Naive thymus-derived CD4-positive, alpha-beta T cell (primary cell): ENCODE measurements at regions of chr3 and their contacts with region 1.

Region 1: GRCh38 chr3:16264708-16265454 is at the starts of genes DPH3 and OXNAD1:
- DNase-seq: peak; percentile 97 to 99 (median 98)
- ATAC-seq: peak; percentile 96
- H3K4me3 ChIP-seq: peak within 1 kb of the TSS; percentile 85
- H3K4me3 Mint-ChIP-seq: peak within 1 kb of the TSS; percentile 85 to 100 (median 98)
- H3K27ac ChIP-seq: peak within 1 kb of the TSS; percentile 88
- H3K27ac Mint-ChIP-seq: peak within 1 kb of the TSS; percentile 96 to 100 (median 98)
- H3K4me1 ChIP-seq: peaks cover 13 to 28% of the 10 kb centered on the region in 2 donors
- H3K4me1 Mint-ChIP-seq: peaks cover 13 to 50% (median 43%) of the 10 kb centered on the region in 7 donors
- H3K27me3 ChIP-seq: no peaks in the 10 kb centered on the region
- H3K27me3 Mint-ChIP-seq: peaks cover 0 to 2% (median 0%) of the 10 kb centered on the region in 5 donors
- total RNA-seq, gene DPH3: 12.4 to 23.6 (median 15.7) TPM
- total RNA-seq, gene OXNAD1: 80.3 to 171 (median 152) TPM

Region 2: GRCh38 chr3:14548321-14548729 is 1716.6 kb before region 1 on chr3:
- CTCF ChIA-PET with region 1: no interaction called
- POLR2A ChIA-PET with region 1: no interaction called
- intact Hi-C with region 1: no loop called
- DNase-seq: peak in 5 of 9 donors; percentile 21 to 33 (median 22)
- ATAC-seq: peak; percentile 47
- H3K4me3 ChIP-seq: no peak overlapping the region
- H3K4me3 Mint-ChIP-seq: no peak overlapping the region
- H3K27ac ChIP-seq: no peak overlapping the region
- H3K27ac Mint-ChIP-seq: no peak overlapping the region
- H3K4me1 ChIP-seq: no peaks in the 10 kb centered on the region
- H3K4me1 Mint-ChIP-seq: peaks cover 0 to 8% (median 0%) of the 10 kb centered on the region in 7 donors
- H3K27me3 ChIP-seq: no peaks in the 10 kb centered on the region
- H3K27me3 Mint-ChIP-seq: peaks cover 18 to 57% (median 41%) of the 10 kb centered on the region in 5 donors

Region 3: GRCh38 chr3:15205934-15206661 is 1058.8 kb before region 1 on chr3 and contains the start of gene CAPN7:
- CTCF ChIA-PET with region 1: no interaction called
- POLR2A ChIA-PET with region 1: interaction called, 4 read pairs
- intact Hi-C with region 1: loop called (anchors 1 kb)
- DNase-seq: peak; percentile 90 to 98 (median 92)
- ATAC-seq: peak; percentile 96
- H3K4me3 ChIP-seq: peak within 1 kb of the TSS; percentile 91
- H3K4me3 Mint-ChIP-seq: peak within 1 kb of the TSS; percentile 85 to 96 (median 94)
- H3K27ac ChIP-seq: peak within 1 kb of the TSS; percentile 94
- H3K27ac Mint-ChIP-seq: peak within 1 kb of the TSS; percentile 87 to 96 (median 93)
- H3K4me1 ChIP-seq: peaks cover 11 to 15% of the 10 kb centered on the region in 2 donors
- H3K4me1 Mint-ChIP-seq: peaks cover 19 to 52% (median 36%) of the 10 kb centered on the region in 7 donors
- H3K27me3 ChIP-seq: no peaks in the 10 kb centered on the region
- H3K27me3 Mint-ChIP-seq: no peaks in the 10 kb centered on the region
- total RNA-seq, gene CAPN7: 34.4 to 104 (median 70.4) TPM

Region 4: GRCh38 chr3:16290007-16290826 is 25.3 kb after region 1 on chr3:
- CTCF ChIA-PET with region 1: interaction called, 92 read pairs
- POLR2A ChIA-PET with region 1: interaction called, 36 read pairs
- intact Hi-C with region 1: loop called (anchors 1 kb)
- DNase-seq: peak in 6 of 9 donors; percentile 44 to 67 (median 62)
- ATAC-seq: peak; percentile 58
- H3K4me3 ChIP-seq: peak overlapping the region; percentile 67
- H3K4me3 Mint-ChIP-seq: peak overlapping the region; percentile 87 to 99 (median 96)
- H3K27ac ChIP-seq: peak overlapping the region; percentile 90
- H3K27ac Mint-ChIP-seq: peak overlapping the region; percentile 86 to 99 (median 97)
- H3K4me1 ChIP-seq: peaks cover 32 to 65% of the 10 kb centered on the region in 2 donors
- H3K4me1 Mint-ChIP-seq: peaks cover 38 to 77% (median 53%) of the 10 kb centered on the region in 7 donors
- H3K27me3 ChIP-seq: no peaks in the 10 kb centered on the region
- H3K27me3 Mint-ChIP-seq: no peaks in the 10 kb centered on the region

Region 5: GRCh38 chr3:16378920-16379319 is 114.0 kb after region 1 on chr3:
- CTCF ChIA-PET with region 1: no interaction called
- POLR2A ChIA-PET with region 1: interaction called, 3 read pairs
- intact Hi-C with region 1: loop called in 1 of 2 experiments (anchors 2 kb)
- DNase-seq: no peak
- ATAC-seq: peak; percentile 19
- H3K4me3 ChIP-seq: no peak overlapping the region
- H3K4me3 Mint-ChIP-seq: peak overlapping the region in 8 of 10 donors; percentile 26 to 85 (median 42)
- H3K27ac ChIP-seq: no peak overlapping the region
- H3K27ac Mint-ChIP-seq: peak overlapping the region in 8 of 9 donors; percentile 54 to 94 (median 90)
- H3K4me1 ChIP-seq: peaks cover 28 to 60% of the 10 kb centered on the region in 2 donors
- H3K4me1 Mint-ChIP-seq: peaks cover 52 to 98% (median 87%) of the 10 kb centered on the region in 7 donors
- H3K27me3 ChIP-seq: no peaks in the 10 kb centered on the region
- H3K27me3 Mint-ChIP-seq: no peaks in the 10 kb centered on the region

Region 6: GRCh38 chr3:16600780-16601539 is 336.1 kb after region 1 on chr3:
- CTCF ChIA-PET with region 1: interaction called, 4 read pairs
- POLR2A ChIA-PET with region 1: no interaction called
- intact Hi-C with region 1: loop called in 1 of 2 experiments (anchors 5 kb)
- DNase-seq: peak; percentile 54 to 79 (median 68)
- ATAC-seq: peak; percentile 68
- H3K4me3 ChIP-seq: no peak overlapping the region
- H3K4me3 Mint-ChIP-seq: no peak overlapping the region
- H3K27ac ChIP-seq: no peak overlapping the region
- H3K27ac Mint-ChIP-seq: no peak overlapping the region
- H3K4me1 ChIP-seq: peaks cover 0 to 3% of the 10 kb centered on the region in 2 donors
- H3K4me1 Mint-ChIP-seq: peaks cover 5 to 23% (median 16%) of the 10 kb centered on the region in 7 donors
- H3K27me3 ChIP-seq: no peaks in the 10 kb centered on the region
- H3K27me3 Mint-ChIP-seq: peaks cover 0 to 54% (median 4%) of the 10 kb centered on the region in 5 donors

Region 7: DNA sequence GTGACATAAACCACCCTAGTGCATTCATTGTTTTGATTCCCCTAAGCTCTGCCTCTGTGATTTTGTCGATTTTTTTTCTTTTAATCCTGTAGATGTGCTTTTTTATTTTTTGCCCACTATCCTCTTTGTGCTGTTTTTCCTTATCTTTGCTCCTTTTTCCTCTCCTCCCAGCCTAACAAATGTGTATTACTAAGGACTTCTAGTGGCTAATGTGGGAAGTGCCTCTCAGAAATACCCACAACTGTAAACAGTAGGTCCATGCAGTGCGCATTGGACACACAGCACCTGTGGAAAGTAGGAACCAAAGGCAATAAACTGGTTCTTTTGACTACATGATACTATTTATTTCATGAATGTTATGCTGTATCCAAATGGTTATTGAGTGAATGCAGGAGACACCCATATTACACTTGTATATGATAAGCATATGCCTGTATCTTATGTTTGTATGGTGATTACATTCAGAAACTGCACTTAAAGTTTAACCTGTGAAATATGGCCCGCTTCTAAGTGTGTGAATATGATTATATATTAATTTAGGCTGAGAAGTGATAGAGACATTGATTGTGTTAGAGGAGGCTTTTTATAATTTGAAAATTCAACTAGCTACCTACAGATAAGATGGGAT is 767.6 kb after region 1 on chr3:
- CTCF ChIA-PET with region 1: no interaction called
- POLR2A ChIA-PET with region 1: no interaction called
- intact Hi-C with region 1: no loop called
- DNase-seq: no peak
- ATAC-seq: no peak
- H3K4me3 ChIP-seq: no peak overlapping the region
- H3K4me3 Mint-ChIP-seq: peak overlapping the region in 1 of 10 donors; percentile 11
- H3K27ac ChIP-seq: no peak overlapping the region
- H3K27ac Mint-ChIP-seq: peak overlapping the region in 7 of 9 donors; percentile 4 to 60 (median 17)
- H3K4me1 ChIP-seq: peaks cover 0 to 24% of the 10 kb centered on the region in 2 donors
- H3K4me1 Mint-ChIP-seq: peaks cover 48 to 90% (median 80%) of the 10 kb centered on the region in 7 donors
- H3K27me3 ChIP-seq: no peaks in the 10 kb centered on the region
- H3K27me3 Mint-ChIP-seq: no peaks in the 10 kb centered on the region

Region 8: DNA sequence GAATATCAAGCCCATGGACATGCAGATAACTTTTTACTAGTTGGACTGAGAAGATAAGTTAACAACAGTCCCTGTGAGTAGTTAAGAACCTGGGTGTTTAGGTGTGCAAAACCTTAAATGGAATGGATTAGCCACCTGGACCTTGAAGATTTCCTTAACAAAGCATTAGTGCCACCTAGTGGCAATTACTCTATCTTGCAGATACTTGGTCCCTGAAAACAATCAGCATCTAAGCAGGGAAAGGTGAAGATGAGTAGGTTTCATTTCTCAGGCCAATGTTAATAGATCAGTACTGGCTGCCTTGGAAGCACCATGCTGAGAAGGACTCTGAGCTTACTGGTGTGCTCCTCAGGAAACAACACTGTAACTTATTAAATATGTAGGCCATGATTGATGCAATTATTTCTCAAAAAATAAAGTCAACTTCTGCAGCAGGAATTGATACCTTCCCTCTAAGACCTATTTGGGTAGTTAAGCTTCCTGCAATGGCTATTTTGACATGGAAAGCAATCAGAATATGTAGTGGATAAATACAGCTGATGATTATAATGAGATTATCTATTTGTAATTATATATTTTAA is 1148.2 kb after region 1 on chr3:
- CTCF ChIA-PET with region 1: no interaction called
- POLR2A ChIA-PET with region 1: no interaction called
- intact Hi-C with region 1: loop called in 1 of 2 experiments (anchors 10 kb)
- DNase-seq: peak in 6 of 9 donors; percentile 21 to 53 (median 41)
- ATAC-seq: peak; percentile 69
- H3K4me3 ChIP-seq: no peak overlapping the region
- H3K4me3 Mint-ChIP-seq: no peak overlapping the region
- H3K27ac ChIP-seq: no peak overlapping the region
- H3K27ac Mint-ChIP-seq: peak overlapping the region in 1 of 9 donors; percentile 51
- H3K4me1 ChIP-seq: no peaks in the 10 kb centered on the region
- H3K4me1 Mint-ChIP-seq: no peaks in the 10 kb centered on the region
- H3K27me3 ChIP-seq: no peaks in the 10 kb centered on the region
- H3K27me3 Mint-ChIP-seq: no peaks in the 10 kb centered on the region